Activated B cell treated with CpG ODN at 0.5 μM for 24 hours (primary cell): ENCODE measurements at regions of chr11 and their contacts with region 1.

Region 1: GRCh38 chr11:66081505-66081904 is 11.4 kb downstream of the PACS1 start:
- DNase-seq: peak; percentile 50
- ATAC-seq: peak; percentile 90
- H3K4me3 Mint-ChIP-seq: peak overlapping the region; percentile 80
- H3K27ac Mint-ChIP-seq: peak overlapping the region; percentile 98
- H3K4me1 Mint-ChIP-seq: peaks cover 94% of the 10 kb centered on the region
- H3K27me3 Mint-ChIP-seq: no peaks in the 10 kb centered on the region
- CTCF ChIP-seq: no peak

Region 2: GRCh38 chr11:66112601-66113098 is 31.1 kb after region 1 on chr11:
- CTCF ChIA-PET with region 1: interaction called, 5 read pairs
- POLR2A ChIA-PET with region 1: interaction called, 8 read pairs
- intact Hi-C with region 1: loop called (anchors 1 kb)
- DNase-seq: no peak
- ATAC-seq: peak; percentile 53
- H3K4me3 Mint-ChIP-seq: peak overlapping the region; percentile 58
- H3K27ac Mint-ChIP-seq: peak overlapping the region; percentile 83
- H3K4me1 Mint-ChIP-seq: peaks cover 96% of the 10 kb centered on the region
- H3K27me3 Mint-ChIP-seq: no peaks in the 10 kb centered on the region
- CTCF ChIP-seq: no peak